ENCODE measurements at regions of chr4 and their contacts with region 1.

Region 1: DNA sequence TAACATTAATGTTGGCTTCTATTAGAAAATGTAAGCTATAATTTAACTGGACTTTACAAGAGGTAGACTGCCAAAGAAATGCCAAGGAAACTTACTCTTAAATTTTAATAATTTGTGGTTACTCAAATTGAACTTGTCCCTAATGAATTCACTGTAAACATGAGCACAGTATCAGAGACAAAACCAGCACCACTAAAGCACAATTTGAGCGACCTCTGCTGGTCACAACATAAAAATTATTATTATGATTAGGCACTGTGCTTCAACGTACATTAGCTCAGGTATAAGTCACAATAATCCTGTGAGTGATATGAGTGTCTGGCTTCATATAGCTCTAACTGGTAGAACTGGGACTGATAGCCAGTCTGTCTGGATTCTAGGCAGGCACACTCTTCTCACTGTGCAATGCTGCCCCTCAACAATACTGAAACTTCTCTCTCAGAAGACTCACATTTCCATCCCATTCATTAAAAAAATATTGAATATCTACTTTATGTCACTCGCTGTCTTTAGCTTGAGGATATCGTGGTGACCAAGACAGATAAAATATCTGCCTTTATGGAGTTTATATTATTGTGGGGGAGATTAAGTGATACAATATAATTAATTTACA is 8.0 kb downstream of the NUDT6 start:
- DNase-seq: no peak
- H3K4me3 ChIP-seq: no peak overlapping the region
- H3K27me3 ChIP-seq: no peaks in the 10 kb centered on the region
- CTCF ChIP-seq: peak; percentile 47

Region 2: DNA sequence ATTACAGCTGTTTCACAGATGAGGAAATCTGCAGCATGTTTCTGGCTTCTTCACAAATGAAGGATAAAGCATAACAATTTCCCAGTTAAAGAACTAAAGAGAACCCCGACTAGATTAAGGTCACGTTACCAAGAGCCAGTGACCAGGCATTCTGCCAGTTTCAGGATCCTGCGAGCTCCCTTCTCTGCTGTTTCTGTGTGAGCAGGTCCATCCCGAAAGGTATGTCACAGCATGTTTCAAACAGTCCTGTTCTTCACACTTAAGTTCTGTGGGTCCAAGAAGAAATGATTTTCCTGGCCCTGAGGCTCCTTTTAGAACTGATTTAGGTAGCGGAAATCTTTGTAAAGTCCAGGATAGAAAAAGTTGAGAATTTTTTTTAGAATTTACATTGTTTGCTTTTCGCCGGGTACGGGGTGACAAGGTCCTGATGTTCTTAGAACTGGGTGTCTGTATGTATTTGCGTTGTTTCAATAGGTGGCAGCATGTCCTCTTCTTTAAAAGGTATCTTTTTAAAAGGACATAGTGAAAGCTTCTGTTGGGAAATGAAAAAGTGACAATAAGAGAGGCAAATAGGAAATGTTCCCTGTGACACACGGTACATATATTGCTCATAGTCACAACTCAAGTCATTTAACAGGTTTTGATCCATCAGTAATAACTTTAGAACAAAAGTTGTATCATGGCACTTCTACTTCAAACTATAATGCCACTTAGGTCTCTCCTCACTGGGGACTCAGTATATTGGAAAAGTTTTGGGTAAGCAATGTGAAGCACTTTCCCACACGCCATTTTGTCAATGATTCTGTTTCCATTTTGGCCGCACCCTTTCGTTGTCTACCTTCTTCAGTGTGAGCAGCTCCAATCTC is 311.9 kb before region 1 on chr4:
- CTCF ChIA-PET with region 1: interaction called, 15 read pairs
- POLR2A ChIA-PET with region 1: no interaction called
- DNase-seq: no peak
- H3K4me3 ChIP-seq: no peak overlapping the region
- H3K27me3 ChIP-seq: no peaks in the 10 kb centered on the region
- CTCF ChIP-seq: peak; percentile 50

Region 3: DNA sequence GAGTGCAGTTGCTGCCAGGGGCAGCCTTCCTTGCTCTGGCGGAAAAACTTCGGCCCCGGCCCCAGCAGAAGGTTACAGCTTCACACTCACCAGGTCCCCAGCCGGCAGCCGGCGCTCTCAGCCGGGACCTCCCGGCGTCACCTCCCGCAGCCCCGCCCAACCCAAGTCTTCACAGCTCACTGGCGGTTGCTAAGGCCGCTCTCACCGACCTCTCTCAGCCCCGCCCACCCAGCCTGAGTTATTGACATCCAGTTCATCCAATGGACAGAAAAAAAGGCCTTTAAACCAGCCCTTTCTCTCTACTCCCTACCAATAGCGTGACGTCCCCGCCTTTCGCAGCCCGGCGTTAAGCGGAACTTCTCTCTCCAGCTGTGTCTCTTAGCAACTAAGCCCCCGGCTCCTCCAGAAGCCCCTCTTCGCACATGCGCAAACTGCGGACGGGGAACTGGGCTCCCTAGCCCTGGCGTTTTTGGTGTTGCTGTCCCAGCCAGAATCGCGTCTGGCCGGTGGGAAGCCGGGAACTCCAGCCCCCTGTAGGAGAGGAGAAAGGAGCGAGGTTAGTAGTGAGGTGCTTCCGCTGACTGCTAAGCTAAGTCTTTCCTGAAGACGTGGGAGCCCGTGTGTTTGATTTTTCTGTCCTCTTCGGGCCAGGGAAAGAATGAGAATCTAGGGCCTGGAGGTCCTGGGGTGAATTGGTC is 181.9 kb before region 1 on chr4 and contains the start of gene BBS12:
- CTCF ChIA-PET with region 1: interaction called, 13 read pairs
- POLR2A ChIA-PET with region 1: no interaction called
- DNase-seq: peak; percentile 97
- H3K4me3 ChIP-seq: peak within 1 kb of the TSS; percentile 74
- H3K27me3 ChIP-seq: no peaks in the 10 kb centered on the region
- CTCF ChIP-seq: peak; percentile 73
- polyA plus RNA-seq, gene BBS12: 1.9 and 3.3 TPM in 2 replicates

Region 4: DNA sequence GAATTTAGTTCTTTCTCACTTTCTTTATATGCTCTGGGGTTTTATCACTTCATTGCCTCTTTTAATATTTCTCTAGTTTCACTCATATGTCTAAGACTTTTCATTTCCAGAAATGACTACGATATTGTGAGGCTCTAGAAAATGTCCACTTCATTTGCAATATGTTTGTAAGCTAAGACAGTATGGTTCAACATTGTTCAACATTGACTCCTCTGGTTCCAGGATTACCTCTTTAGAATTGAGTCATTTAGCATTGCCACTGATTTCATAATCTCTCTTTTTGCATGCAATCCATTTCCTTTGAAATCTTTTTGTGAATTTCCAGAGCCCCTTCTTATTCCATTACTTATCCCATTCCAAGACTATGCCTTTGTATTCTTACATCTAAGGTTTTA is 149.6 kb before region 1 on chr4:
- CTCF ChIA-PET with region 1: interaction called, 54 read pairs
- POLR2A ChIA-PET with region 1: no interaction called
- DNase-seq: peak; percentile 77
- H3K4me3 ChIP-seq: no peak overlapping the region
- H3K27me3 ChIP-seq: no peaks in the 10 kb centered on the region
- CTCF ChIP-seq: no peak

Region 5: GRCh38 chr4:122903766-122904288 is 10.6 kb before region 1 on chr4:
- CTCF ChIA-PET with region 1: interaction called, 15 read pairs
- POLR2A ChIA-PET with region 1: interaction called, 4 read pairs
- DNase-seq: no peak
- H3K4me3 ChIP-seq: no peak overlapping the region
- H3K27me3 ChIP-seq: no peaks in the 10 kb centered on the region
- CTCF ChIP-seq: no peak

Region 6: DNA sequence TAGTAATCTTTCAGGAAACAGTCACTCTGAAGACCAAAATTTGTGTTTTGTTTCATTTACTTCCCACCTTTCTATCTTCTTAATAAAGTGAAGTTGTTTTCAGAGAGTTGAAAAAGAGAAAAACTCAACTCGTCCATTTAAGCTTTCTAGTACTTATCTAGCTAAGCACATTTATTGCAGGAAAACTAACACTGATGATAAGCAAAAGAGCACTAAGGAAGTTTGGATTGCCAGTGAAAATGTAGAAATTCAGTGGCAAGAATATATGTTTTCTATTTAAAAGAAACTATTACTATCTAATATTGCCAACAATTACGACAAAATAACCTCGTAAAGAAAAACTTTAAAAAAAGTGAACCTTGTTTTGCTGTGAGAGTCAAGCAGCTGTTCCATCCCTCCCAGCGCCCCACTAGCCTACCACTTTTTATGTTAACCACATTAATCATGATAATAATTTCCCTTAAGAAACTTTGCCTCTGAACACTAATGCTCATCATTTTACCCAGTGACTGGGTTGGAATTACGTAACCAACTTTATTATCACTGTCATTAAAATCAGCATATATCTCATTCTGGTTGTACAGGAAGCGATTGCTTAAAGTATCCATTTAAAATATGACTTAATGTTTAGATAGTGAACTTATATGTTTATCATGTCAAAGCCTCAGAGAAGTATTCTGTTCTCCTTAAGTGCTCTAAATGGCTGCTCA is 507.0 kb after region 1 on chr4:
- CTCF ChIA-PET with region 1: no interaction called
- POLR2A ChIA-PET with region 1: no interaction called
- DNase-seq: no peak
- H3K4me3 ChIP-seq: no peak overlapping the region
- H3K27me3 ChIP-seq: no peaks in the 10 kb centered on the region
- CTCF ChIP-seq: no peak

Measured in BJ (cell line).